ENCODE measurements at regions of chr19 and their contacts with region 1.

Region 1: DNA sequence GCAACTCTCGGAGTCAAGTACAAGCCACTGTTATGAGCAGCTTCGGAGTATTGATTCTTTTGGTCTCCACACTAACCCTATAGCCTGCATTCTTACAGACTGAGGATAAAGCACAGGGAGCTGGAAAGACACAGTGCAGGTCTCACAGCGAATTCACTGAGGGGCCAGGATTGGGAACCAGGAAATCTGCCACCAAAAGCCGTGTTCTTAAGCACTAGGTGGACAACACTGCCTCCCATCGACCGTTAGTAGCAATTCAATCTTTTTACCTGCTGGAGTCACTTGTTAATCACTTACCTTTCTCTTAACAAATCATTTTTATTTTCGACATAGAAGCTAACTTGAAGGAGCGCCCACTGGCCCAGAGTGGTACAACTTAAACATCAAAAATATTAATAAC is 6.3 kb downstream of the PMIS2 start:
- DNase-seq: no peak
- ATAC-seq: no peak
- H3K4me3 ChIP-seq: no peak overlapping the region
- H3K27ac ChIP-seq: no peak overlapping the region
- H3K4me1 ChIP-seq: no peaks in the 10 kb centered on the region; the same call in none of the 2 replicates
- H3K27me3 ChIP-seq: no peaks in the 10 kb centered on the region
- CTCF ChIP-seq: peak; percentile 64 to 74 (median 70); a peak in 5 of 6 replicates
- EP300 ChIP-seq: no peak
- POLR2A ChIP-seq: no peak
- RAD21 ChIP-seq: peak; percentile 84

Region 2: GRCh38 chr19:35509861-35510625 is 82.2 kb before region 1 on chr19:
- CTCF ChIA-PET with region 1: interaction called, 55 read pairs
- POLR2A ChIA-PET with region 1: interaction called, 5 read pairs
- RAD21 ChIA-PET with region 1: interaction called, 24 read pairs
- SMC1A ChIA-PET with region 1: interaction called, 28 read pairs
- in situ Hi-C with region 1: no loop called
- intact Hi-C with region 1: loop called (anchors 1 kb)
- DNase-seq: no peak
- ATAC-seq: peak; percentile 88
- H3K4me3 ChIP-seq: peak overlapping the region; percentile 74
- H3K27ac ChIP-seq: peak overlapping the region; percentile 52
- H3K4me1 ChIP-seq: peaks cover 8% of the 10 kb centered on the region
- H3K27me3 ChIP-seq: no peaks in the 10 kb centered on the region; a peak in 1 of 4 replicates
- CTCF ChIP-seq: peak; percentile 96; a peak in 5 of 6 replicates
- EP300 ChIP-seq: no peak
- POLR2A ChIP-seq: no peak; the same call in 1 of the 2 replicates
- RAD21 ChIP-seq: peak; percentile 71

Region 3: GRCh38 chr19:35559281-35559659 is 33.0 kb before region 1 on chr19:
- CTCF ChIA-PET with region 1: interaction called, 5 read pairs
- POLR2A ChIA-PET with region 1: interaction called, 10 read pairs
- RAD21 ChIA-PET with region 1: interaction called, 3 read pairs
- SMC1A ChIA-PET with region 1: no interaction called
- in situ Hi-C with region 1: no loop called
- intact Hi-C with region 1: no loop called
- DNase-seq: peak; percentile 46
- ATAC-seq: peak; percentile 87
- H3K4me3 ChIP-seq: no peak overlapping the region
- H3K27ac ChIP-seq: no peak overlapping the region
- H3K4me1 ChIP-seq: peaks cover 30% of the 10 kb centered on the region
- H3K27me3 ChIP-seq: no peaks in the 10 kb centered on the region; a peak in 2 of 4 replicates
- CTCF ChIP-seq: no peak
- EP300 ChIP-seq: no peak
- POLR2A ChIP-seq: no peak
- RAD21 ChIP-seq: no peak

Region 4: DNA sequence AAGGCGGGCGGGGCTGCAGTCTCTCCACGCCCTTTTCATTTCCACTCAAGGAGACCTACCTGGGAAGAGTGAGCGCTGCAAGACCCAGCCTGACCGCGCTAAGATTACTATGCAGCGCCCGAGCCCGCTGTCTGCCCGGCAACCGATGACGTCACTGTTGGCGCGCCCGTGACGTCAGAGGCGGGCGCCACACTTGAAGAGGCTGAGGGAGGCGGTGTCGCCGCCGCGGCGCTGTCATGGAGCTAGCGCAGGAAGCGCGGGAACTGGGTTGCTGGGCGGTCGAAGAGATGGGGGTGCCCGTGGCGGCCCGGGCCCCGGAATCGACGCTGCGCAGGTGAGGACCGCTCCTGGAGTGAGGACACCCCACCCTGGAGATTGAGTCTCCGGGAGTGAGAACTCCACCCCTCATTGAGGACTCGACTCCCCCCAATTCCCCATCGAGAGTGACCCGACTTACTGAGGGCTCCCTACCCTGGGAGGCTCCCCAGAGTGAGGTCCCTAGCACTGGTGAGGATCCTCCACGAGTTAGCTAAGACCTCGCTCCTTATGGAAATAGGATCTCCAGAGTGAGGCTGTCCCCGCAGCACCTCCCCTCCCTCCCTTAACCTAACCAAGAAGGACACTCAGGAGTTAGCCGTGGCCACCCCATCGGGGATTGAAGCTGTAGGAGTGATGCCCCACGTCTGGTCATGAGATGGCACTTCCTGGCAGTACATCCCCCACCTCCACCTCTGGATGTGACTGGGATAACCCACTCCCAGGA is 20.5 kb after region 1 on chr19 and contains the start of gene HAUS5:
- CTCF ChIA-PET with region 1: interaction called, 4 read pairs
- POLR2A ChIA-PET with region 1: interaction called, 16 read pairs
- RAD21 ChIA-PET with region 1: interaction called, 11 read pairs
- SMC1A ChIA-PET with region 1: interaction called, 14 read pairs
- in situ Hi-C with region 1: no loop called
- intact Hi-C with region 1: no loop called
- DNase-seq: peak; percentile 70
- ATAC-seq: peak; percentile 92
- H3K4me3 ChIP-seq: peak within 1 kb of the TSS; percentile 74
- H3K27ac ChIP-seq: peak within 1 kb of the TSS; percentile 81
- H3K4me1 ChIP-seq: peaks cover 17% of the 10 kb centered on the region
- H3K27me3 ChIP-seq: no peaks in the 10 kb centered on the region
- CTCF ChIP-seq: peak in 1 of 3 experiments; percentile 24; a peak in 1 of 6 replicates
- EP300 ChIP-seq: peak in 1 of 2 experiments; percentile 57; a peak in 1 of 4 replicates
- POLR2A ChIP-seq: peak; percentile 91
- RAD21 ChIP-seq: no peak
- polyA plus RNA-seq, gene HAUS5: 3.1 to 3.6 TPM

Measured in GM12878 (cell line).